Mammary epithelial cell (primary cell): ENCODE measurements at regions of chr2 and their contacts with region 1.

Region 1: GRCh38 chr2:99644419-99644787 is 154.6 kb upstream of the REV1 start:
- DNase-seq: no peak
- H3K4me3 ChIP-seq: no peak overlapping the region
- H3K27ac ChIP-seq: no peak overlapping the region
- H3K4me1 ChIP-seq: no peaks in the 10 kb centered on the region
- H3K27me3 ChIP-seq: no peaks in the 10 kb centered on the region
- CTCF ChIP-seq: no peak

Region 2: DNA sequence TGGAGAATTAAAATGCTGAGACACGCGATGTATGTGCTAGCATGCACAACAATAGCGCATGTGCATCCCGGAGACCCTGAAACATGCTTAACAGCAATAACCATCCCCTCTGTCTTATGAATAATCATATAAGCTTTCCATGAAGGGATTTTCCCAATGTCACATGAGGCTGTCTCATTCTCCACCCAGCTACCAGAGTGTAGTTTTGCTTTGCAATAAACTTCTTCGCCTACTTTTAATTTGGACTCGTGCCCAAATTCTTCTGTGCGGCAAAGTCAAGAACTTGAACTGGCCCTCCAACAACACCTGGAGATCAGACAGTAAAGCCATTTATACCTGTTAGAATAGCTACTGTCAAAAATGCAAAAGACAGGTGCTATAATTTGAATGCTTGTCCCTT is 358.9 kb before region 1 on chr2:
- CTCF ChIA-PET with region 1: no interaction called
- dilution Hi-C with region 1: no loop called
- in situ Hi-C with region 1: no loop called
- intact Hi-C with region 1: loop called (anchors 5 kb)
- DNase-seq: peak; percentile 46
- H3K4me3 ChIP-seq: no peak overlapping the region
- H3K27ac ChIP-seq: no peak overlapping the region
- H3K4me1 ChIP-seq: no peaks in the 10 kb centered on the region
- H3K27me3 ChIP-seq: no peaks in the 10 kb centered on the region
- CTCF ChIP-seq: no peak

Region 3: GRCh38 chr2:100018341-100019193 is 374.2 kb after region 1 on chr2:
- CTCF ChIA-PET with region 1: no interaction called
- dilution Hi-C with region 1: no loop called
- in situ Hi-C with region 1: no loop called
- intact Hi-C with region 1: no loop called
- DNase-seq: no peak
- H3K4me3 ChIP-seq: no peak overlapping the region
- H3K27ac ChIP-seq: no peak overlapping the region
- H3K4me1 ChIP-seq: no peaks in the 10 kb centered on the region
- H3K27me3 ChIP-seq: no peaks in the 10 kb centered on the region
- CTCF ChIP-seq: no peak